ENCODE measurements at regions of chr3 and their contacts with region 1.

Region 1: DNA sequence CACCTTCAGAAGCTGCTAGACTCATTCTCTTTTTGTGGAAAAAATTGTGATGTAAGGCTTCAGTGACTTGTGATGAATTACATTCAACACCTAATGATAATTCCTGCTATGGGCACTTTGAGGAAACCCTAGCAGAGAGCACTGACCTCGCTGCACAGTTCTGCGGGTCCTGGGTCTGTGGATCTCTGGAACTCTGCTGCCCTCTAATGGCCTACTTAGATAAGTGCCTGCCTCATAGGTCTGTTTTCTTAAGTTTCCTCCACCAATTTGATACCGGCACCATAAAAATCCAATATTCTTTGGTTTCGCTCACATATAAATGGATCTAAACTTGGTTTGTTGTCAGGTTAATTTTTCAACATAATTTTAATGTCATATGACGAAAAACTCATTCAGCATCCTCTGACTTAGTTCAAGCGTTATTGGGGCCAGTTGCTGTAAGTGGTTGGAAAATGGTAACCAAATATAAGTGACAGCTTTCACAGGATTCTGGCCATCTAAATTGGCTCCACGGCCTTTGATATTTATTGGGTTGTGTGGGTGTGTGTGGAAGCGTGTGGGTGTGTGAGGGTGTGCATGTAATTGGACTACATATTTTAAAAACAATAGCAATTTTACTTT is 10.4 kb downstream of the SLITRK3 start:
- DNase-seq: peak; percentile 0
- ATAC-seq: peak; percentile 98
- H3K4me3 ChIP-seq: no peak overlapping the region
- H3K27ac ChIP-seq: no peak overlapping the region
- H3K4me1 ChIP-seq: no peaks in the 10 kb centered on the region
- H3K27me3 ChIP-seq: no peaks in the 10 kb centered on the region
- CTCF ChIP-seq: peak; percentile 79 to 83 (median 81)
- EP300 ChIP-seq: no peak
- POLR2A ChIP-seq: no peak
- RAD21 ChIP-seq: peak; percentile 91

Region 2: GRCh38 chr3:164194869-164195268 is 990.9 kb before region 1 on chr3:
- CTCF ChIA-PET with region 1: no interaction called
- POLR2A ChIA-PET with region 1: no interaction called
- RAD21 ChIA-PET with region 1: no interaction called
- SMC1A ChIA-PET with region 1: no interaction called
- in situ Hi-C with region 1: no loop called
- intact Hi-C with region 1: loop called (anchors 5 kb)
- DNase-seq: no peak
- ATAC-seq: peak; percentile 65
- H3K4me3 ChIP-seq: no peak overlapping the region
- H3K27ac ChIP-seq: no peak overlapping the region
- H3K4me1 ChIP-seq: no peaks in the 10 kb centered on the region
- H3K27me3 ChIP-seq: no peaks in the 10 kb centered on the region
- CTCF ChIP-seq: peak in 2 of 3 experiments; percentile 5 to 9; a peak in 2 of 6 replicates
- EP300 ChIP-seq: no peak
- POLR2A ChIP-seq: no peak
- RAD21 ChIP-seq: no peak

Region 3: GRCh38 chr3:165169368-165169767 is 16.4 kb before region 1 on chr3:
- CTCF ChIA-PET with region 1: no interaction called
- POLR2A ChIA-PET with region 1: no interaction called
- RAD21 ChIA-PET with region 1: no interaction called
- SMC1A ChIA-PET with region 1: no interaction called
- in situ Hi-C with region 1: no loop called
- intact Hi-C with region 1: no loop called
- DNase-seq: no peak
- ATAC-seq: no peak
- H3K4me3 ChIP-seq: no peak overlapping the region
- H3K27ac ChIP-seq: no peak overlapping the region
- H3K4me1 ChIP-seq: no peaks in the 10 kb centered on the region
- H3K27me3 ChIP-seq: no peaks in the 10 kb centered on the region
- CTCF ChIP-seq: no peak
- EP300 ChIP-seq: no peak
- POLR2A ChIP-seq: no peak
- RAD21 ChIP-seq: no peak